ENCODE measurements at regions of chr15 and their contacts with region 1.

Region 1: GRCh38 chr15:85618956-85619491 is 175.7 kb downstream of the KLHL25 start:
- DNase-seq: peak; percentile 81
- H3K4me3 Mint-ChIP-seq: no peak overlapping the region
- H3K27ac Mint-ChIP-seq: no peak overlapping the region
- H3K4me1 Mint-ChIP-seq: peaks cover 25% of the 10 kb centered on the region
- H3K27me3 Mint-ChIP-seq: no peaks in the 10 kb centered on the region

Region 2: DNA sequence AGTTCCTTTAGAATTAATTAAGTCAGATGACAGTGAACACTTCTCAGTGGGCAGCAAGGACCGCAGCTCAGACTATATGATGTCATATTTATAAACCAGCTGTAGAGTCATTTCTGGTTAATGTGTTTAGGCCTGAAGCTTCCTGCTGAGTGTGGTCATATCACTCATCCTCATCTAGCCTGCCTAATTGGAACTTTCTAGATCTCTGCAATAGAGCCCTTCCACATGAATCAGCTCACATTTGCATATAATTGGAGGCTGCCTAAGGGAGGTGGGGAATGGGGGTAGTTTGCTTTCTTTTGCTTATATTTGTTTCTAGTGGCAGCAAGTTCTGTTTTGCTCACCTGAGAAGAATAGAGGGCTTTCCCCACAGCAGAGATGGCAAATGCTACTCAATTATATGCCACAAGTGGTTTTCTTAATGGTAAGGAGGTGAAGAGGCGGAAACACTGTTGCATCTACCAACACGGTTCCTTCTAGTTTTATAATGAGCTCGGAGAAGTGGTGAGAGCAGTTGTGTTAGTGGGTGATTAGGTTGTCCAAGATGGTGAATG is 27.6 kb after region 1 on chr15:
- CTCF ChIA-PET with region 1: interaction called, 4 read pairs
- POLR2A ChIA-PET with region 1: interaction called, 9 read pairs
- intact Hi-C with region 1: loop called (anchors 1 kb)
- DNase-seq: peak; percentile 58
- H3K4me3 Mint-ChIP-seq: no peak overlapping the region
- H3K27ac Mint-ChIP-seq: peak overlapping the region; percentile 90
- H3K4me1 Mint-ChIP-seq: peaks cover 65% of the 10 kb centered on the region
- H3K27me3 Mint-ChIP-seq: no peaks in the 10 kb centered on the region

Region 3: GRCh38 chr15:85667491-85668424 is 48.7 kb after region 1 on chr15:
- CTCF ChIA-PET with region 1: interaction called, 3 read pairs
- POLR2A ChIA-PET with region 1: interaction called, 6 read pairs
- intact Hi-C with region 1: loop called (anchors 1 kb)
- DNase-seq: peak; percentile 62
- H3K4me3 Mint-ChIP-seq: peak overlapping the region; percentile 20
- H3K27ac Mint-ChIP-seq: peak overlapping the region; percentile 95
- H3K4me1 Mint-ChIP-seq: peaks cover 33% of the 10 kb centered on the region
- H3K27me3 Mint-ChIP-seq: no peaks in the 10 kb centered on the region

Region 4: DNA sequence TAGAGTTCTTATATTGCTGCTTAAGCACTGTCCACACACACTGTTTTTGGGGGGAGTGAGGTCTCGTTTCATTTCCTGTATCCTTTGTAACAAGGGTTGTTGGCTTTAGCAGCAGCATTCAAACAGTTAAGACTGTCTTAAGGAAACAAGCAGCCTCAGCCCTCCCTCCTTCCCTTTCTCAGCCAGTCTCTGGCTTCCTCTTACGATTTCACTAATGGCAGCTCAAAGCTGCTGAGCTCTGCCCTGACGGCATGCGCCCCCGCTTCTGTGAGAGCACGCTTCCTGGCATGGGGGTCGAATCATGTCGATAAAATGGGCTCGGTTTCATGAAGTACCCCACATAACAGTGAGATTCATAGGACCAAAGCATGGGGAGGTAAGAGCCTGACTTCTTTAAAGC is 70.7 kb after region 1 on chr15:
- CTCF ChIA-PET with region 1: interaction called, 6 read pairs
- POLR2A ChIA-PET with region 1: interaction called, 8 read pairs
- intact Hi-C with region 1: loop called (anchors 1 kb)
- DNase-seq: peak; percentile 78
- H3K4me3 Mint-ChIP-seq: peak overlapping the region; percentile 81
- H3K27ac Mint-ChIP-seq: peak overlapping the region; percentile 98
- H3K4me1 Mint-ChIP-seq: peaks cover 78% of the 10 kb centered on the region
- H3K27me3 Mint-ChIP-seq: no peaks in the 10 kb centered on the region

Region 5: GRCh38 chr15:85723960-85724945 is 105.2 kb after region 1 on chr15:
- CTCF ChIA-PET with region 1: interaction called, 3 read pairs
- POLR2A ChIA-PET with region 1: no interaction called
- intact Hi-C with region 1: loop called (anchors 5 kb)
- DNase-seq: peak; percentile 44
- H3K4me3 Mint-ChIP-seq: peak overlapping the region; percentile 58
- H3K27ac Mint-ChIP-seq: peak overlapping the region; percentile 93
- H3K4me1 Mint-ChIP-seq: peaks cover 64% of the 10 kb centered on the region
- H3K27me3 Mint-ChIP-seq: no peaks in the 10 kb centered on the region

Region 6: DNA sequence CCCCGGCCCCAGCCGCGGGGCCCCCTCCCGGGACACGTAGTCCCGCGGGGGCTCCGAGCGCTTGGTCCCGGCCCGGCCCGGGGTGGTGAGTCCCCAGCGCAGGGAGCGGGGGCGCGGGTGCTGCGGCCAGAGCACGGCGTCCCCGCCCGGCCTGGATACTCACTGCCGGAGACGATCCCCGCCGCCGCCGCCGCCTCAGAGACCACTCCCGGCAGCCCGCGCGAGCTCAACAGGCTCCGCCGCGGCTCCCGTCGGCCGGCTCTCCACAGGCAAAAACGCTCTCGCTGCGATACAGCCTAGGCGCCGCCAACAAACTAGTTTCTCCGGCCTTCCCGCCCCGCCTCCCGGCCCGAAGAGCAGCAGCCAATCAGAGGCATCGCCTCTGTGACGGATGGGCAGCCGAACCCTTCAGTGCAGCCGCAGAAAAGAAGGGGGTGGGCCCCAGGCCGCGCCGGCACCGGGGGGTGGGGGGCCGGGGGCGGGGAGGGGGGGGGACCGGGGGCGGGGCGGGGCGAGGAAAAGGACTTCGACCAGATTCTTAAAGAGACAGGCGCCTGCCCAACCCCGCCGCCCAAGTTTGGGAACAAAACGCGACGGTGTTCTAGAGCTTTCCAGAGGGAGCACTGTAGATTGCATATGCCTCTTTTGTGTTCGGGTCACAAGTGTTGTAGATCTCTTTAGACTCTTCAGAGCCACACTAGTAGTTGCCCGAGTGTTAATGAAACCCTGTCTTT is 175.7 kb after region 1 on chr15 and contains the start of gene KLHL25:
- CTCF ChIA-PET with region 1: no interaction called
- POLR2A ChIA-PET with region 1: no interaction called
- intact Hi-C with region 1: loop called (anchors 2 kb)
- DNase-seq: peak; percentile 95
- H3K4me3 Mint-ChIP-seq: peak within 1 kb of the TSS; percentile 90
- H3K27ac Mint-ChIP-seq: peak within 1 kb of the TSS; percentile 74
- H3K4me1 Mint-ChIP-seq: peaks cover 32% of the 10 kb centered on the region
- H3K27me3 Mint-ChIP-seq: no peaks in the 10 kb centered on the region
- total RNA-seq, gene KLHL25: 5.3 to 5.7 TPM

Region 7: DNA sequence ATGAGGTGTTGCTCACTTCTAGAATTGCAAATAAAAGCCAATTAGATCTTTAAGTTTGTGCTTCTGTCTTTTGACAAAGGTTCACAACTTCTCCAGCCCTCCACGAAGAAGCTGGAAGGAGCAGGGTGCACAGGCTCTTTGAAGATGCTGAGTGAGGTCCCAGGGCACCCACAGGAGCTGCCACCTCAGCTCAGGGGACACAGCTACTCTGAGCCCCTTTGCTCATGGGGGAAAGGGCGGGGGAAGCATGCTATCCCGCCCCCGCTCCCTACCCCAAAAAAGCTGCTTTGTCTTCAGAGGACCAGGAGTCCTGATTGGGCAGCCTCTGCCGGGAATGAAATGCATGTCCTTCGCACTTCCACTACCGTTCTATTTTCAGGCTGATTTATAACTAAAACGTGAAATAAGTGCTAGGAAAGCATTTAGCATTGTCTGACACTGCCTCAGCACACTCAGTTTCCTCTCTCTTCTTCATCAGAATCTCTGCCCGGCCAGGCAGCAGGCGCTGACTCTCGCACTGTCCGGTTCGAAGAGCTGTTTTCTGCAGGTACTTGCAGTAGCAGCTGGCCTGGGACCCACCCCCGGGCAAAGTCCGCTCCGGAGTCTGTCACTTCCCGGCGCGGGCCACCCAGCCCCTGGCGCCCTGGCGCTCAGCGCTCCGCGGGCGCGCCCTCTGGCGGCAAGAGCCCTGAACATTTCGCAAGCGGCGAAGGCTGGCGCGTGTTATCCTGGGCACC is 221.2 kb after region 1 on chr15:
- CTCF ChIA-PET with region 1: interaction called, 4 read pairs
- POLR2A ChIA-PET with region 1: no interaction called
- intact Hi-C with region 1: loop called (anchors 5 kb)
- DNase-seq: peak; percentile 88
- H3K4me3 Mint-ChIP-seq: peak overlapping the region; percentile 54
- H3K27ac Mint-ChIP-seq: no peak overlapping the region
- H3K4me1 Mint-ChIP-seq: peaks cover 3% of the 10 kb centered on the region
- H3K27me3 Mint-ChIP-seq: peaks cover 5% of the 10 kb centered on the region

Measured in activated CD4-positive, alpha-beta memory T cell treated with anti-CD3 and anti-CD28 coated beads for 36 hours (primary cell).